CD8-positive, alpha-beta T cell (primary cell): ENCODE measurements at regions of chr17 and their contacts with region 1.

Region 1: GRCh38 chr17:67491009-67491680 is 114.1 kb downstream of the PITPNC1 start:
- DNase-seq: peak in 3 of 9 experiments; percentile 40 to 63 (median 42)
- ATAC-seq: no peak
- H3K4me3 ChIP-seq: no peak overlapping the region
- H3K4me3 Mint-ChIP-seq: peak overlapping the region; percentile 49
- H3K27ac ChIP-seq: peak overlapping the region in 1 of 2 experiments; percentile 32
- H3K27ac Mint-ChIP-seq: peak overlapping the region; percentile 76
- H3K4me1 ChIP-seq: peaks cover 46% of the 10 kb centered on the region
- H3K4me1 Mint-ChIP-seq: peaks cover 86% of the 10 kb centered on the region
- H3K27me3 ChIP-seq: no peaks in the 10 kb centered on the region
- H3K27me3 Mint-ChIP-seq: no peaks in the 10 kb centered on the region
- CTCF ChIP-seq: no peak

Region 2: DNA sequence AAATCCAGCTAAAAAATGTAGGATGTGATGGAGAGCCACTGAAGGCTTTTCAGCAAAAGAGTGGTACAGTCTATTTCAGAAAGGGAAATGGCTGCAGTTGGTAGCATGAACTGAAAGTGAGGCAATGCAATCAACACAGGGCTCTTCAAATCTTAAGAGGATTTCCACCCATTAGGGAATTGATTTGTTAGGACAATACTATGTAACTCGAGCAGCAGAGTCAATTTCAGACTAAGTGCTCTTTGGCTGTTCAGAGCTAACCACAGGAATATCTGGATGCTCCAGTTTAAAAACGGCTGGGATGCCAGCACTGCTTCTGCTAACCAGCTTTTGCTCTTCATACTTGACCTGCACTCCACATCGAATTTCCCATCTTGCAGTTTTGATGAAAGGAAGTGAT is 422.1 kb before region 1 on chr17:
- CTCF ChIA-PET with region 1: no interaction called
- POLR2A ChIA-PET with region 1: no interaction called
- intact Hi-C with region 1: loop called in 1 of 2 experiments (anchors 10 kb)
- DNase-seq: peak in 1 of 9 experiments; percentile 19
- ATAC-seq: no peak
- H3K4me3 ChIP-seq: no peak overlapping the region
- H3K4me3 Mint-ChIP-seq: no peak overlapping the region
- H3K27ac ChIP-seq: no peak overlapping the region
- H3K27ac Mint-ChIP-seq: no peak overlapping the region
- H3K4me1 ChIP-seq: no peaks in the 10 kb centered on the region
- H3K4me1 Mint-ChIP-seq: no peaks in the 10 kb centered on the region
- H3K27me3 ChIP-seq: no peaks in the 10 kb centered on the region
- H3K27me3 Mint-ChIP-seq: no peaks in the 10 kb centered on the region
- CTCF ChIP-seq: no peak

Region 3: GRCh38 chr17:67528751-67529436 is 37.7 kb after region 1 on chr17:
- CTCF ChIA-PET with region 1: no interaction called
- POLR2A ChIA-PET with region 1: no interaction called
- intact Hi-C with region 1: loop called in 1 of 2 experiments (anchors 10 kb)
- DNase-seq: no peak
- ATAC-seq: no peak
- H3K4me3 ChIP-seq: no peak overlapping the region
- H3K4me3 Mint-ChIP-seq: no peak overlapping the region
- H3K27ac ChIP-seq: no peak overlapping the region
- H3K27ac Mint-ChIP-seq: no peak overlapping the region
- H3K4me1 ChIP-seq: peaks cover 4% of the 10 kb centered on the region
- H3K4me1 Mint-ChIP-seq: peaks cover 52% of the 10 kb centered on the region
- H3K27me3 ChIP-seq: no peaks in the 10 kb centered on the region
- H3K27me3 Mint-ChIP-seq: no peaks in the 10 kb centered on the region
- CTCF ChIP-seq: no peak

Region 4: DNA sequence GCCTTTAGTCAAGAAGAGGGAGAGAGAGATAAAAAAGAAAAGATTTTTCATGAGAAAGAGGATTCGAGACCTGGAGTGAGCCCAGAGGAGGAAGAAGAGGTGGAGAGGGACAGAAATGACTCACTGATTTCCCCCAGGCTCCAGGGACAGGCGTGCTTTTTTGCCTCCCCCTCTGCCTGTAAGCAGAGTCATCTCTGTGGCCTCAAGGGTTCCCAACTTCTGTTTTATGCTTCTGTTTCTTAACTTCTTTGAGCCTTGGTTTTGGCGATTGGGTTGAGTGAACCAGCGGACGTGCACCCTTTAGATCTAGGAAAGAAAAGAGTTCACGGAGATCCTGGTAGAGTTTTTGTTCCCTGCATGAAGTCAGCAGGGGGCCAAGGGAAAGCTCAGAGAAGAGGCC is 78.7 kb after region 1 on chr17:
- CTCF ChIA-PET with region 1: no interaction called
- POLR2A ChIA-PET with region 1: no interaction called
- intact Hi-C with region 1: no loop called
- DNase-seq: peak in 1 of 9 experiments; percentile 7
- ATAC-seq: no peak
- H3K4me3 ChIP-seq: no peak overlapping the region
- H3K4me3 Mint-ChIP-seq: no peak overlapping the region
- H3K27ac ChIP-seq: no peak overlapping the region
- H3K27ac Mint-ChIP-seq: peak overlapping the region; percentile 45
- H3K4me1 ChIP-seq: no peaks in the 10 kb centered on the region
- H3K4me1 Mint-ChIP-seq: peaks cover 36% of the 10 kb centered on the region
- H3K27me3 ChIP-seq: no peaks in the 10 kb centered on the region
- H3K27me3 Mint-ChIP-seq: no peaks in the 10 kb centered on the region
- CTCF ChIP-seq: no peak